ENCODE measurements at regions of chr9 and their contacts with region 1.

Region 1: DNA sequence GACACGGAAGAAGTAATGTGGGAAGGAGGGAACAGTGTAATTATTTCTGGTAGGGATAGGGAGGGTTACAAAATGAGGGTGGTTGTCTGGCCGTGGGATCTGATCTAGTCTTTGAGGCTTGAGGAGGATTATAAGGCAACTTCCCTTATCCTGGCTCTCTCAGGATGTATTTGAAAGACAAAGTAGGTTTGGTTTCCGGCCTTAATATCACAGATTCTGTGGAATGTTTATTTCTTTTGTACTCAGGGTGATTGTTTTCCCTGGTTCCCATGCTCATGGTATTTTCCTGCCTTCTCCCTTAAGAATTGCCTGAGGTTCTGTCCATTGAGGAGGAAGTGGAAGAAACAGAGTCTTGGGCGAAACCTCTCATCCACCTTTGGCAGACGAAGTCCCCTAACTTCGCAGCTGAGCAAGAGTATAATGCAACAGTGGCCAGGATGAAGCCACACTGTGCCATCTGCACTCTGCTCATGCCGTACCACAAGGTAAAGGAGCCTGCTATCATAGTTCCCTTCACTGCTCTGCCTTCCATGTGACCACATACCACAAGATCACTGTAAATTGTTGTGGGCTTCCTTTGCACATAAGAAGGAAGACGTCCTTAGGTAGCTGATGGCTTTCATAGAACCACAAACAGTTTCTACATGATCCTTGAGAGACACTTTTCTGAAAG is 253.8 kb downstream of the KDM4C start:
- DNase-seq: no peak
- H3K4me3 ChIP-seq: no peak overlapping the region
- H3K27ac ChIP-seq: no peak overlapping the region
- H3K4me1 ChIP-seq: no peaks in the 10 kb centered on the region
- H3K27me3 ChIP-seq: no peaks in the 10 kb centered on the region
- CTCF ChIP-seq: no peak

Region 2: DNA sequence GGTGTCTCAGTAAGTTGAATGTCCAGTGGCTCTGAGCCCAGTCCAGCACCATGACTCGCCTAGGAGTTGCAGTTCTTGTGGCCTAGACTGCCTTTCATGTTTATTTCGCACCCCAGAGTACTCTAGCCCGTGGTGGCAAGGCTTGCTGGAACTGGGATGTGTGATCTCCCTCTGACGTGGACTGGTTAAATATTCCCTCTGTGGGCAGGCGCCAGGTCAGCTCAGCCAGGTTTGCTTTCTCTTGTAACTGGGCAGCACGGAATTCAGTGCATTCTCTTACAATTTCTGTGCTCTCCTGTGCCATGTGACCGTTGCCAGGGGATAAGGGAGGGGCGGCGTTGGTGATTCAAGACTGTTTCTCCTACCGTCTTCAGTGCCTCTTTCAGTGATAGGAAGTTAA is 17.1 kb after region 1 on chr9:
- CTCF ChIA-PET with region 1: no interaction called
- POLR2A ChIA-PET with region 1: no interaction called
- intact Hi-C with region 1: loop called (anchors 2 kb)
- DNase-seq: no peak
- H3K4me3 ChIP-seq: no peak overlapping the region
- H3K27ac ChIP-seq: no peak overlapping the region
- H3K4me1 ChIP-seq: no peaks in the 10 kb centered on the region
- H3K27me3 ChIP-seq: no peaks in the 10 kb centered on the region
- CTCF ChIP-seq: no peak

Measured in A673 (cell line).